HepG2 (cell line): ENCODE measurements at regions of chr17 and their contacts with region 1.

Region 1: GRCh38 chr17:12545877-12546513 is 119.7 kb upstream of the MYOCD start:
- DNase-seq: peak; percentile 41
- ATAC-seq: peak; percentile 74
- H3K4me3 ChIP-seq: no peak overlapping the region
- H3K27ac ChIP-seq: no peak overlapping the region
- H3K4me1 ChIP-seq: no peaks in the 10 kb centered on the region
- H3K27me3 ChIP-seq: no peaks in the 10 kb centered on the region
- CTCF ChIP-seq: peak; percentile 77
- EP300 ChIP-seq: no peak
- POLR2A ChIP-seq: no peak
- RAD21 ChIP-seq: no peak

Region 2: GRCh38 chr17:12667299-12667958 is 121.4 kb after region 1 on chr17:
- CTCF ChIA-PET with region 1: no interaction called
- POLR2A ChIA-PET with region 1: no interaction called
- in situ Hi-C with region 1: no loop called
- intact Hi-C with region 1: loop called (anchors 1 kb)
- DNase-seq: peak; percentile 62
- ATAC-seq: peak; percentile 67
- H3K4me3 ChIP-seq: no peak overlapping the region
- H3K27ac ChIP-seq: no peak overlapping the region
- H3K4me1 ChIP-seq: no peaks in the 10 kb centered on the region
- H3K27me3 ChIP-seq: peaks cover 0 to 39% of the 10 kb centered on the region in 2 experiments; a peak in 4 of 5 replicates
- CTCF ChIP-seq: peak; percentile 66
- EP300 ChIP-seq: no peak
- POLR2A ChIP-seq: no peak
- RAD21 ChIP-seq: 0 out of 2 replicates have a peak, but pooled peaks have one; percentile 41

Region 3: GRCh38 chr17:12744298-12744697 is 198.3 kb after region 1 on chr17:
- CTCF ChIA-PET with region 1: interaction called, 3 read pairs
- POLR2A ChIA-PET with region 1: no interaction called
- in situ Hi-C with region 1: no loop called
- intact Hi-C with region 1: loop called (anchors 1 kb)
- DNase-seq: no peak
- ATAC-seq: no peak
- H3K4me3 ChIP-seq: no peak overlapping the region
- H3K27ac ChIP-seq: no peak overlapping the region
- H3K4me1 ChIP-seq: no peaks in the 10 kb centered on the region
- H3K27me3 ChIP-seq: peaks cover under 1 to 6% of the 10 kb centered on the region in 2 experiments; a peak in 2 of 5 replicates
- CTCF ChIP-seq: no peak
- EP300 ChIP-seq: no peak
- POLR2A ChIP-seq: no peak
- RAD21 ChIP-seq: no peak